ENCODE measurements at regions of chr12 and their contacts with region 1.

Region 1: GRCh38 chr12:121793838-121794533 is 498 bp upstream of the RHOF start:
- H3K4me3 Mint-ChIP-seq: peak overlapping the region; percentile 78
- H3K27ac Mint-ChIP-seq: peak overlapping the region; percentile 89
- H3K4me1 Mint-ChIP-seq: peaks cover 84% of the 10 kb centered on the region
- H3K27me3 Mint-ChIP-seq: no peaks in the 10 kb centered on the region

Region 2: DNA sequence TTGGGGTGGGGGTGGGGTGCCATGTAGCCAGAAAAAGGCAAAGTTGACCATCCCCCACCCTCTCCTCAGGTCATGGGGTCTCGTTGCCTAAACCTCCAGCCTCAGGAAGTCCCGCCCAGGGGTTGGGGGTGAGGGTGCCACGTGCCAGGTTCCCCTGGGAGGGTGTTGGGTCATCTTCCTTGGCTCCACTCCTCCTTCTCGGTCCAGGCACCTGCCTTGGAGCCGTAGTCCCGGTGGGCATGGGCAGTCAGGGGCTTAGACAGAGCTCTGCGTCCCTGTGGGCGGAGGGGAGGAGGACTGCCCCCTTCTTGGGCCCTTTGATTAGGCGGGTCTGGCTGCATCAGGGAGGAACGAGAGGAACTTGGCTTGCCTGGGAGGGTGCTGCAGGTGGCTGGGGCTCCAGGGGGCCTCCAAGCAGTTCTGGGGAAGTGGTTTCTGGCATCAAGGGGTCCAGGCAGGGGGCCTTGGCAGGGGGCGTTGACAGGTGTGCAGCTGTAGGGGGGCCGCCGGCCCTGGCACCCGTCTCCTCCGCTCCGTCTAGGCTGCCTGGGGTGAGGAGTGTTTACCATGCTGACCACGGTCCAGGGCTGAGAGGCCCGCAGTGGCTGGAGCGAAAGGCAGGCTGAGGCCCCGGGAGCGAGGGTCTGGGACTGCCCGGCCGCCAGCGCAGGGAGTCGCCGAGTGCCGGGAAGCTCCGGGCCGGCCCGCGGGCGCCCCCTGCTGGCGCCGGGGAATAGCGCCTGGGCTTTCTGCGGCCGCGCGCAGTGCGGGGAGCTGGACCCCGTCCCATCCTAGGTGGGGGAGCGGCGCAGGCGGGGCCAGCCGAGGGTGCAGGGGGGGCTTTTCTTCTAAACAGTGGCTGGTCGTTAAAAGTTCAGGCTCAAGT is 17.7 kb after region 1 on chr12:
- intact Hi-C with region 1: loop called (anchors 1 kb)
- H3K4me3 Mint-ChIP-seq: peak overlapping the region; percentile 82
- H3K27ac Mint-ChIP-seq: peak overlapping the region; percentile 76
- H3K4me1 Mint-ChIP-seq: peaks cover 69% of the 10 kb centered on the region
- H3K27me3 Mint-ChIP-seq: no peaks in the 10 kb centered on the region

Region 3: DNA sequence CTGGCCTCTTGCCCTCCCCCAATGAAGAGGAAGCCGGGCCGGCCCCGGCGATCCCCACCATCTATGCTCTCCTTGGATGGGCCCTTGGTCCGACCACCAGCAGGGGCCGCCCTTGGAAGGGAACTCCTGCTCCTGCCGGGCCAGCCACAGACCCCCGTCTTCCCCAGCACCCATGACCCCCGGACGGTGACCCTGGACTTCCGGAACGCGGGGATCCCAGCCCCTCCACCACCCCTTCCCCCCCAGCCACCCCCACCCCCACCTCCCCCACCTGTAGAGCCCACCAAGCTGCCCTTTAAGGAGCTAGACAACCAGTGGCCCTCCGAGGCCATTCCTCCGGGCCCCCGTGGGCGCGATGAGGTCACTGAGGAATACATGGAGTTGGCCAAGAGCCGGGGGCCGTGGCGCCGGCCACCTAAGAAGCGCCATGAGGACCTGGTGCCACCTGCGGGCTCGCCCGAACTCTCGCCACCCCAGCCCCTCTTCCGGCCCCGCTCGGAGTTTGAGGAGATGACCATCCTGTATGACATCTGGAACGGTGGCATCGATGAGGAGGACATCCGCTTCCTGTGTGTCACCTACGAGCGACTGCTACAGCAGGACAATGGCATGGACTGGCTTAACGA is 29.2 kb after region 1 on chr12:
- intact Hi-C with region 1: no loop called
- H3K4me3 Mint-ChIP-seq: no peak overlapping the region
- H3K27ac Mint-ChIP-seq: no peak overlapping the region
- H3K4me1 Mint-ChIP-seq: peaks cover 5% of the 10 kb centered on the region
- H3K27me3 Mint-ChIP-seq: no peaks in the 10 kb centered on the region

Region 4: GRCh38 chr12:121849665-121850064 is 55.7 kb after region 1 on chr12:
- intact Hi-C with region 1: no loop called
- H3K4me3 Mint-ChIP-seq: no peak overlapping the region
- H3K27ac Mint-ChIP-seq: peak overlapping the region; percentile 6
- H3K4me1 Mint-ChIP-seq: peaks cover 7% of the 10 kb centered on the region
- H3K27me3 Mint-ChIP-seq: peaks cover 3% of the 10 kb centered on the region

Region 5: GRCh38 chr12:121955258-121956235 is 161.6 kb after region 1 on chr12:
- intact Hi-C with region 1: no loop called
- H3K4me3 Mint-ChIP-seq: no peak overlapping the region
- H3K27ac Mint-ChIP-seq: no peak overlapping the region
- H3K4me1 Mint-ChIP-seq: no peaks in the 10 kb centered on the region
- H3K27me3 Mint-ChIP-seq: no peaks in the 10 kb centered on the region